CD8-positive, alpha-beta memory T cell (primary cell): ENCODE measurements at regions of chr18 and their contacts with region 1.

Region 1: DNA sequence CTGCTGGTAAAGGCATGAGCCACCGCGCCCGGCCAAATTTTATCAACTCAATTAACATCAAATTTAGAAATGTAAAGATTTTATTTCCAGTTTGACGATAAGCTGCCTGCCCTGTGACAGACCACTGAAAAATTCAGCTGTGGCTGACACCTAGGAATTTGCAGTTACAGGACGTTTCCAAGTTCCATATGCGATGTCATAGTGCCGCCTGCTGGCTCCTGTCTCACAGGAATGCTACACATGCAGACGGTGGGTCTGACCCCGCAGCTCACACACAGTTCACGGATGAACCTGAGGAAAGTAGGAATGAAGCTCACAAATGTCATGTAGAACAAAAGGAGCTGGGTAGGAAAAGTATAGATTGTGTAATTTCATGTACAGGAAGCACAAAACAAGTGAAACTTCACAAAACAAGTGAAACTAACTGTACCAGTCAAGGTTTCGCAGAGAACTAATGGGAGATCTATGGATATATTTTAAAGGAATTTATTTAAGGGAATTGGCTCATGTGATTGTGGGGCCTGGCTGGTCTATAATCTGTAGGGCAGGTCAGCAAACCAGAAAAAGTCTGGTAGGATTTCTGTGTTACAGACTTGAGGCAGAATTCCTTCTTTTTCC is 13.2 kb upstream of the SEH1L start:
- DNase-seq: peak; percentile 64 to 86 (median 72)
- H3K4me3 ChIP-seq: no peak overlapping the region
- H3K4me3 Mint-ChIP-seq: peak overlapping the region in 1 of 7 donors; percentile 42
- H3K27ac ChIP-seq: no peak overlapping the region
- H3K27ac Mint-ChIP-seq: peak overlapping the region in 1 of 8 donors; percentile 64
- H3K4me1 ChIP-seq: peaks cover 6% of the 10 kb centered on the region
- H3K4me1 Mint-ChIP-seq: peaks cover 13 to 15% (median 14%) of the 10 kb centered on the region in 3 donors
- H3K27me3 ChIP-seq: no peaks in the 10 kb centered on the region
- H3K27me3 Mint-ChIP-seq: peaks cover 3 to 4% of the 10 kb centered on the region in 2 donors

Region 2: DNA sequence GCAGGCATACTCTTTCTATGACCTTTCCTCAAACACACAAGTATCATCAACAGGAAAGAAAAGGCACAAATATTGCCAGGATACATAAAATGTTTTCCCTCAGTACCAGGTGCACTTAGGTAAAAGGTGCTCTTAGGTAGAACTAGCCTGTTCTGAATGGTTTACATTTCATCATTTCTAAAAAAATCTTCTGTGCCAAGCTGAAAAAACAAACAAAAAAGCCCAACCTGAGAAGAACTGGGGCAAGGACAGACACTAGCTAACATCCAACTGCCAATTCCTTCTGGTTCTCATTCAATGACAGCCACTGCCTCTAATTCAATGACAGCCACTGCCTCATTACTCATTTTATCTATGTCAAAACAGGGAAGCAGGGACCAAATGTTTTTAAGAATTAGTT is 345.1 kb before region 1 on chr18:
- CTCF ChIA-PET with region 1: no interaction called
- POLR2A ChIA-PET with region 1: no interaction called
- DNase-seq: no peak
- H3K4me3 ChIP-seq: no peak overlapping the region
- H3K4me3 Mint-ChIP-seq: no peak overlapping the region
- H3K27ac ChIP-seq: no peak overlapping the region
- H3K27ac Mint-ChIP-seq: no peak overlapping the region
- H3K4me1 ChIP-seq: no peaks in the 10 kb centered on the region
- H3K4me1 Mint-ChIP-seq: no peaks in the 10 kb centered on the region
- H3K27me3 ChIP-seq: no peaks in the 10 kb centered on the region
- H3K27me3 Mint-ChIP-seq: peaks cover 0 to 3% of the 10 kb centered on the region in 2 donors

Region 3: GRCh38 chr18:12668041-12668440 is 266.5 kb before region 1 on chr18:
- CTCF ChIA-PET with region 1: no interaction called
- POLR2A ChIA-PET with region 1: no interaction called
- DNase-seq: no peak
- H3K4me3 ChIP-seq: no peak overlapping the region
- H3K4me3 Mint-ChIP-seq: no peak overlapping the region
- H3K27ac ChIP-seq: no peak overlapping the region
- H3K27ac Mint-ChIP-seq: no peak overlapping the region
- H3K4me1 ChIP-seq: no peaks in the 10 kb centered on the region
- H3K4me1 Mint-ChIP-seq: no peaks in the 10 kb centered on the region
- H3K27me3 ChIP-seq: no peaks in the 10 kb centered on the region
- H3K27me3 Mint-ChIP-seq: no peaks in the 10 kb centered on the region

Region 4: DNA sequence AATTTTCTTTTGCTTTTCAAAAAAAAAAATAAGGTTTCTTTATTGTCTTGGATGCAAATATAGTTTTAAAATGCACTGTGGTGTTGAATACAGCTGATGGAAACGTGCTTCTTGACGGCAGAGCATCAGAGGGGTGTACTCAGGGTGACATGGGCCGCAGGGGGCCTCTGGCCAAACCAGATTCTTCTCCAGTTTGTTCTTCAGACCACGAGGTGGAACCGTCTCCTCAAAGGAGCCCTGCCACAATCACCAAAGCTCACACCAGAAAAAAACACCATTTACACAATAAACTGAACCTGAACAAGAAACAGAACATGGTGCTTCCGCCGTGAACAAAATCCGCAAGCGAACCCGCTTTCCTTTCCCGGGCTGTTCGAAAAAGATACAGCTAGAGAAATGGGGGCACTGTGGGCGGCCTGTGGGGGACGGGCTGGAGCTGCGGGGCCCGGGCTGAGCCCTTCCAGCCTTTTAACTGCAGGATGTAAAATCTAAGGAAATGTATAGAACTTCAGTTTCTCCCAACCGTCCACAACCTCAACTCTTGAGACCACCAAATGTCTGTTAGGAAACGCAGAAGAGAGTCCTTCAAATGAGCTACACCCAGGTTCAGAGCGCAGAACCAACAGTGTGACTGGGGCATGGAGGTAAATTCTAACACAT is 197.2 kb before region 1 on chr18:
- CTCF ChIA-PET with region 1: interaction called, 45 read pairs
- POLR2A ChIA-PET with region 1: no interaction called
- DNase-seq: no peak
- H3K4me3 ChIP-seq: no peak overlapping the region
- H3K4me3 Mint-ChIP-seq: no peak overlapping the region
- H3K27ac ChIP-seq: no peak overlapping the region
- H3K27ac Mint-ChIP-seq: no peak overlapping the region
- H3K4me1 ChIP-seq: no peaks in the 10 kb centered on the region
- H3K4me1 Mint-ChIP-seq: no peaks in the 10 kb centered on the region
- H3K27me3 ChIP-seq: no peaks in the 10 kb centered on the region
- H3K27me3 Mint-ChIP-seq: no peaks in the 10 kb centered on the region

Region 5: GRCh38 chr18:12883684-12884405 is 50.7 kb before region 1 on chr18 and contains the start of gene PTPN2:
- CTCF ChIA-PET with region 1: interaction called, 14 read pairs
- POLR2A ChIA-PET with region 1: no interaction called
- DNase-seq: peak; percentile 85 to 97 (median 95)
- H3K4me3 ChIP-seq: peak within 1 kb of the TSS; percentile 76
- H3K4me3 Mint-ChIP-seq: peak within 1 kb of the TSS; percentile 91 to 97 (median 94)
- H3K27ac ChIP-seq: peak within 1 kb of the TSS; percentile 97
- H3K27ac Mint-ChIP-seq: peak within 1 kb of the TSS; percentile 87 to 99 (median 98)
- H3K4me1 ChIP-seq: peaks cover 50% of the 10 kb centered on the region
- H3K4me1 Mint-ChIP-seq: peaks cover 55 to 72% (median 67%) of the 10 kb centered on the region in 3 donors
- H3K27me3 ChIP-seq: no peaks in the 10 kb centered on the region
- H3K27me3 Mint-ChIP-seq: peaks cover 0 to 9% of the 10 kb centered on the region in 2 donors
- total RNA-seq, gene PTPN2: 52.6 to 60.3 TPM

Region 6: GRCh38 chr18:12911025-12911928 is 23.3 kb before region 1 on chr18:
- CTCF ChIA-PET with region 1: interaction called, 12 read pairs
- POLR2A ChIA-PET with region 1: no interaction called
- DNase-seq: peak; percentile 35 to 69 (median 52)
- H3K4me3 ChIP-seq: peak overlapping the region; percentile 39
- H3K4me3 Mint-ChIP-seq: peak overlapping the region in 6 of 7 donors; percentile 60 to 70 (median 65)
- H3K27ac ChIP-seq: no peak overlapping the region
- H3K27ac Mint-ChIP-seq: peak overlapping the region in 5 of 8 donors; percentile 9 to 84 (median 60)
- H3K4me1 ChIP-seq: peaks cover 12% of the 10 kb centered on the region
- H3K4me1 Mint-ChIP-seq: peaks cover 9 to 15% (median 13%) of the 10 kb centered on the region in 3 donors
- H3K27me3 ChIP-seq: no peaks in the 10 kb centered on the region
- H3K27me3 Mint-ChIP-seq: no peaks in the 10 kb centered on the region

Region 7: DNA sequence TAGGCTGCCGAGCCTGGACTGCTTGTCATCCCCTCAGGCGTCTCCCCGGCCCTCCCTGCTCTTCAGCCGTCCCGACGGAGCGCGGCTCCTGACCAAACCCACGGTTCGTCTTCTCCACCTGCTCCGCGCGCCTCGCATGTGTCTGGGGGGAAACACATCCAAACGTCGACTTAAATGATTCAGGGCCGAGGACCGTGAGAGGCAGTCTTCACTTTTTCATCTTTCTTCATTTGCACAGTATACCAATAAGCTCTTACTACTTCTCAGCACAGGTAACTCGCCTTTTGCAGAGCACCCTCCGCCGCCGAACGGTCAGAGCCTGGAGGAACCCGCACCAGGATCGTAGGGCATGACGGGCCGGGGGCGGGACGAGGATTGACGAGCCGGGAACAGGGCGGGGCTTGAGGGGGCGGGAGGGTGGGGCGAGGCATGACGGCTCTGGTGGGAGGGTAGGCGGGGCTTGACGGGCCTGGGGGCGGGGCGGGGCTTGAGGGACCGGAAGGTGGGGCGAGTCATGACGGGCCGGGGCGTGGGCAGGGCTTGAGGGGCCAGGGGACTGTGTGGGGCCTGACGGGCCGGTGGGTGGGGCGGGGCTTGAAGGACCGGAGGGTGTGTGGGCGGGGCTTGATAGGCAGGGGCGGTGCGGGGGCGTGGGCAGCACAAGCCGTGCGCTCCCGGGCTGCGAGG is 12.9 kb after region 1 on chr18 and contains the start of gene SEH1L:
- CTCF ChIA-PET with region 1: interaction called, 26 read pairs
- POLR2A ChIA-PET with region 1: no interaction called
- DNase-seq: peak; percentile 97 to 100 (median 98)
- H3K4me3 ChIP-seq: peak within 1 kb of the TSS; percentile 84
- H3K4me3 Mint-ChIP-seq: peak within 1 kb of the TSS; percentile 90 to 96 (median 94)
- H3K27ac ChIP-seq: peak within 1 kb of the TSS; percentile 90
- H3K27ac Mint-ChIP-seq: peak within 1 kb of the TSS; percentile 94 to 100 (median 98)
- H3K4me1 ChIP-seq: peaks cover 32% of the 10 kb centered on the region
- H3K4me1 Mint-ChIP-seq: peaks cover 22 to 40% (median 37%) of the 10 kb centered on the region in 3 donors
- H3K27me3 ChIP-seq: no peaks in the 10 kb centered on the region
- H3K27me3 Mint-ChIP-seq: peaks cover 0 to 9% of the 10 kb centered on the region in 2 donors
- total RNA-seq, gene SEH1L: 132 to 141 TPM